GM12878 (cell line): ENCODE measurements at regions of chr17 and their contacts with region 1.

Region 1: DNA sequence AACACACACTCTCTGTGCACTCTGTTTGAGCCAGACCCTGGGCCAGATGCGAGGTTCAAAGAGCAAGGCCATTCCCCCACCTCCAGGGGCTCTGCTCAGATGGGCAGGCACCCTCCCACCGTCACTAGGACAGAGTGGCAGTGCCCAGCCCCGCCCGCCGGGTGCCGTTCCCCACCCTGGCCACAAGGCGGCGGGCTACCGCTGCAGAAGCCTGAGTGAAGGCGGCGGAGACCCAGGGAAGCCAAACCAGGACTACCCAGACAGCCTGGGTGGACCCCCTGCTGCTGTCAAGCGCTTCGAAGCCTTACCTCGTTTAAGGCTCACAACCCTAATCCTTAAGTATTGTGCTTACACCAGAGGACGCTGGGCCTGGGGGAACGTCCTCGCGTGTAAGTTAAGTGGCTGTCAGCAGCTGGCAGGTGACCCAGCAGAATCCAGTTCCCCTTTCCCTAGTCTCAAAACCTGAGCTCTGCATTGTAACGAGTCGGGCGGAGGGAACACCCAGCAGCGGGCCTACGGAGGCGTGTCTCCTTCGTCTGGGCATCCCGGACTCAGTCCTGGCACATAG is 4.5 kb downstream of the ARHGAP27 start:
- DNase-seq: no peak
- ATAC-seq: peak; percentile 76
- H3K4me3 ChIP-seq: peak overlapping the region; percentile 48
- H3K27ac ChIP-seq: peak overlapping the region; percentile 56
- H3K4me1 ChIP-seq: peaks cover 26% of the 10 kb centered on the region
- H3K27me3 ChIP-seq: no peaks in the 10 kb centered on the region
- CTCF ChIP-seq: peak; percentile 96 to 99 (median 98); a peak in 5 of 6 replicates
- EP300 ChIP-seq: no peak
- POLR2A ChIP-seq: no peak
- RAD21 ChIP-seq: peak; percentile 86

Region 2: DNA sequence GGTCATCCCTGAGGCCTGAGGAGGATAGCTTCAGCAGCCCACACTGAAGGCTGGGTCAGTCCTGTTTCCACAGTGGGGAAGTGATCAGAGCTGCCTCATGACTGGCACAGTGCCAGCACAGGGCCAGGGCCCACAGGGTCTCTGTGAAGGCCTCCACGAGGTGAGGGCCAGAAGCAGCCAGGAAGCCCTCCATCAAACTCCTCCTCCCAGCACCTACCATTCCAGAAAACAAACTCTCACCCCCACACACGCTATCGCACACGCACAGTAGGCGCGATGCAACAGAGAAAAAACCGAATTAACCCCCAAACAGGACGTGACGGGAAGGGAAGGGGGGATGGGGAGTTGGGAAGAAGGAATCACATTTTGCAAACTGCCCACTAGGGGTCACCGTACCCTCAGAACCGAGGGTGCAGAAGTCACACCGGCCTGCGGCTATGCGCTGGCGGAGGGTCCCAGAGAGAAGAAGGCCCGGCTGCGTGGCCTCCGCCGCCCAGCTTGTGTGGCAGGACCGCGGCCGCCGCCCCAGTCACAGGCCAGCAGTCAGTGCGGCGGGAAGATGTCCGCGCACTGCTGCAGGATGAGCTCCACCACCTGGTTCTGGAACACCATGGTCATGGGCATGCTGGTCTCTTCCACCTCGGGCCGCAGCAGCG is 33.1 kb before region 1 on chr17:
- CTCF ChIA-PET with region 1: interaction called, 15 read pairs
- POLR2A ChIA-PET with region 1: no interaction called
- RAD21 ChIA-PET with region 1: interaction called, 6 read pairs
- SMC1A ChIA-PET with region 1: interaction called, 6 read pairs
- in situ Hi-C with region 1: no loop called
- intact Hi-C with region 1: no loop called
- DNase-seq: no peak
- ATAC-seq: peak; percentile 80
- H3K4me3 ChIP-seq: no peak overlapping the region
- H3K27ac ChIP-seq: no peak overlapping the region
- H3K4me1 ChIP-seq: no peaks in the 10 kb centered on the region
- H3K27me3 ChIP-seq: no peaks in the 10 kb centered on the region
- CTCF ChIP-seq: peak; percentile 54 to 70 (median 58); a peak in 5 of 6 replicates
- EP300 ChIP-seq: no peak
- POLR2A ChIP-seq: 0 out of 2 replicates have a peak, but pooled peaks have one; percentile 14
- RAD21 ChIP-seq: peak; percentile 79

Region 3: DNA sequence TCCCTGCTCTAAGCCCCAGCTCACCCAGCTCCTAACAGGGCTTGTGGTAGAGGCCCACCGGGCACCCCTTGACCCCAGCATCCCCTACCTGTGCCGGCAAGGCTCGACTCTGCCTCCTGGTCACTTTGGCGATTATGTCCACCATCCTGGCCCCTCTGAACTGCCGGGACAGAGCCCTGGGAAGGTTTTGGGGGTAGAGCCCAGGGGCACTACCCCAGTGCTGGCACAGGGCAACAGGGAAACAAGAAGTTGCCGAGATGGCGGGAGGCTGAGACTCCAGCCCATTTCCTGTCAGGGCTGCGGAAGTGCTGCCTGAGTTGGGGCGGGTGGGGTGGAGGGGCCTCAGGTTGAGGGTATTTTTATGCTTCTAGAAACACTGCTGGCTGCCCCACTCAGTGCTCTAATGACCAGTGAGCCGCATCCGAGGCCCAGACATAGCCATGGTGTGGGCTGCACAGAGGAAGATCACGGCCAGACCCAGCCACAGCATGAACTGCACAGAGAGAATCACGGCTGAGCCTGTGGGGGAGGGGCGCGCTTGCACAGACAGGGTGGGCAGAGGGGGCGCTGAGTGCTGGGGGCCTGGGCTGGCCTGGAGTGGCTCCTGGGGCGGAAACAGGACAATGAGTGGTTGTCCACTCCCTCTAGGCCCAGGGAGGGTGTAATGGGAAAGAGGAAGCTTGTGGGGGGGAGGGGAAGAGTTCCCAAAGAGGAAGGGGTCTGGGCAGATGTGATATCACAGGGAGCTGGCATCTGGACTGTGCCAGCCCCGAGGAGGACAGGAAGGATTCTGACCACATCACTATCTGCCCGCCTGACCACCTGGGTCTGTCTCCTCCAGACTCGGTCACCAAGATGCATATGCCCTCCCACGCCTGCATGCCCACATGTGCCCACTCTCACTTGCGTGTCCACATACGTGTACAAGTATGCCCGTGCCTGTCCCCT is 17.7 kb before region 1 on chr17:
- CTCF ChIA-PET with region 1: interaction called, 67 read pairs
- POLR2A ChIA-PET with region 1: interaction called, 7 read pairs
- RAD21 ChIA-PET with region 1: interaction called, 24 read pairs
- SMC1A ChIA-PET with region 1: interaction called, 21 read pairs
- in situ Hi-C with region 1: no loop called
- intact Hi-C with region 1: loop called (anchors 2 kb)
- DNase-seq: no peak
- ATAC-seq: peak; percentile 73
- H3K4me3 ChIP-seq: peak overlapping the region; percentile 89
- H3K27ac ChIP-seq: peak overlapping the region; percentile 92
- H3K4me1 ChIP-seq: peaks cover 48% of the 10 kb centered on the region
- H3K27me3 ChIP-seq: no peaks in the 10 kb centered on the region
- CTCF ChIP-seq: no peak
- EP300 ChIP-seq: no peak
- POLR2A ChIP-seq: peak; percentile 77
- RAD21 ChIP-seq: no peak

Region 4: GRCh38 chr17:45584092-45585036 is 156.2 kb after region 1 on chr17:
- CTCF ChIA-PET with region 1: interaction called, 3 read pairs
- POLR2A ChIA-PET with region 1: no interaction called
- RAD21 ChIA-PET with region 1: interaction called, 4 read pairs
- SMC1A ChIA-PET with region 1: no interaction called
- in situ Hi-C with region 1: no loop called
- intact Hi-C with region 1: loop called (anchors 2 kb)
- DNase-seq: no peak
- ATAC-seq: peak; percentile 78
- H3K4me3 ChIP-seq: peak overlapping the region; percentile 73
- H3K27ac ChIP-seq: peak overlapping the region; percentile 84
- H3K4me1 ChIP-seq: peaks cover 12% of the 10 kb centered on the region; the same call in 1 of the 2 replicates
- H3K27me3 ChIP-seq: no peaks in the 10 kb centered on the region
- CTCF ChIP-seq: no peak
- EP300 ChIP-seq: no peak; a peak in 1 of 4 replicates
- POLR2A ChIP-seq: peak; percentile 82
- RAD21 ChIP-seq: no peak; the same call in 1 of the 2 replicates